PC-3 (cell line): ENCODE measurements at regions of chr12 and their contacts with region 1.

Region 1: GRCh38 chr12:31589904-31590641 is 863 bp downstream of the DENND5B start:
- DNase-seq: peak; percentile 49
- ATAC-seq: peak; percentile 57
- H3K4me3 ChIP-seq: peak overlapping the region; percentile 87
- H3K27ac ChIP-seq: peak overlapping the region; percentile 64
- H3K4me1 ChIP-seq: peaks cover 12% of the 10 kb centered on the region
- H3K27me3 ChIP-seq: no peaks in the 10 kb centered on the region
- CTCF ChIP-seq: no peak

Region 2: GRCh38 chr12:31369712-31370521 is 220.2 kb before region 1 on chr12:
- CTCF ChIA-PET with region 1: no interaction called
- POLR2A ChIA-PET with region 1: no interaction called
- intact Hi-C with region 1: no loop called
- DNase-seq: no peak
- ATAC-seq: no peak
- H3K4me3 ChIP-seq: no peak overlapping the region
- H3K27ac ChIP-seq: no peak overlapping the region
- H3K4me1 ChIP-seq: no peaks in the 10 kb centered on the region
- H3K27me3 ChIP-seq: no peaks in the 10 kb centered on the region
- CTCF ChIP-seq: no peak

Region 3: GRCh38 chr12:31471823-31472222 is 118.2 kb before region 1 on chr12:
- CTCF ChIA-PET with region 1: no interaction called
- POLR2A ChIA-PET with region 1: interaction called, 4 read pairs
- intact Hi-C with region 1: loop called (anchors 2 kb)
- DNase-seq: peak; percentile 95
- ATAC-seq: peak; percentile 95
- H3K4me3 ChIP-seq: no peak overlapping the region
- H3K27ac ChIP-seq: peak overlapping the region; percentile 72
- H3K4me1 ChIP-seq: peaks cover 30% of the 10 kb centered on the region
- H3K27me3 ChIP-seq: no peaks in the 10 kb centered on the region
- CTCF ChIP-seq: no peak

Region 4: GRCh38 chr12:31524791-31525495 is 65.1 kb before region 1 on chr12:
- CTCF ChIA-PET with region 1: no interaction called
- POLR2A ChIA-PET with region 1: no interaction called
- intact Hi-C with region 1: loop called (anchors 5 kb)
- DNase-seq: peak; percentile 34
- ATAC-seq: peak; percentile 33; the same call in 1 of the 2 replicates
- H3K4me3 ChIP-seq: no peak overlapping the region
- H3K27ac ChIP-seq: peak overlapping the region; percentile 39; the same call in 1 of the 2 replicates
- H3K4me1 ChIP-seq: peaks cover 44% of the 10 kb centered on the region
- H3K27me3 ChIP-seq: no peaks in the 10 kb centered on the region
- CTCF ChIP-seq: no peak